Aorta (tissue), 5 donors: ENCODE measurements at regions of chr6 and their contacts with region 1.

Region 1: GRCh38 chr6:41027799-41028628 is 11.0 kb downstream of the UNC5CL start:
- DNase-seq: peak; percentile 88 to 97
- ATAC-seq: peak; percentile 95
- H3K4me3 ChIP-seq: peak overlapping the region; percentile 8 to 10
- H3K27ac ChIP-seq: no peak overlapping the region
- H3K4me1 ChIP-seq: no peaks in the 10 kb centered on the region
- H3K27me3 ChIP-seq: no peaks in the 10 kb centered on the region

Region 2: DNA sequence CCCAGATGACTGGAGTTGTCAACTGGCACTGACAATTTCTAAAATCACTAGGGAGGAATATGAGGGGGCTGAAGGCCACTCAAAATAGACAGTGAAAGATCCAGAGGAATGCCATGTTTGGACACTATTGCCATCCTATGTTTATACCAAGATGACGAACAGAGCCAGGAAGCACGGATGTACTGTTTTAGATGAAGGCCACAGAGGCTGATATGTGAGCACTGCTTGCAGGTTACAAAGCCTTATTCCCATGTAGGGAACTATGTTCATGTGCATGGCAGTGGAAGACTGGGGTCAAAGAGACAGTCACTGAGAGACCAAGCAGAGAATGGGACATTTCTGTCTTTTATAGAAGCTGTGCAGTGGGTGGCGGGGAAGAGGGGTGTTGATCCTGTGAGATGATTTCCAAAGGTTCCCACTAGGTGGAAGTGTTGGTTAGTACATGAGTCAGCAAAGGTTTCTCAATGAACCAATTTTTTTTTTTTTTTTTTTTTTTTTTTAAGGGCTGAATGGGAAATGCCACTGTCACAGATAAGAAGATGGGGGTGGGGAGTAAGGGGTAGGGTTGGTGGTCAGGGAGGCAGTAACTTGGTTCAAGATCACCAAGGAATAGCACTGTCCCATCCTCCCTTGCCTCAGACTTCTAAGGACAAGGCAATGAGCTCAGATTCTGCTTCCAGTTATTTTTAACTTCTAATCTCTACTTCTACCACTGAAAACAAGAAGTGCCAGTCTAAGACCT is 1047.0 kb before region 1 on chr6:
- intact Hi-C with region 1: loop called (anchors 5 kb)
- DNase-seq: no peak
- ATAC-seq: peak; percentile 89
- H3K4me3 ChIP-seq: no peak overlapping the region
- H3K27ac ChIP-seq: no peak overlapping the region
- H3K4me1 ChIP-seq: no peaks in the 10 kb centered on the region
- H3K27me3 ChIP-seq: no peaks in the 10 kb centered on the region

Region 3: GRCh38 chr6:40550202-40551101 is 477.6 kb before region 1 on chr6:
- intact Hi-C with region 1: loop called in 1 of 2 experiments (anchors 5 kb)
- DNase-seq: peak in 1 of 2 donors; percentile 14
- ATAC-seq: peak; percentile 70
- H3K4me3 ChIP-seq: no peak overlapping the region
- H3K27ac ChIP-seq: no peak overlapping the region
- H3K4me1 ChIP-seq: no peaks in the 10 kb centered on the region
- H3K27me3 ChIP-seq: no peaks in the 10 kb centered on the region

Region 4: GRCh38 chr6:40912158-40912946 is 115.7 kb before region 1 on chr6:
- intact Hi-C with region 1: no loop called
- DNase-seq: peak in 1 of 2 donors; percentile 51
- ATAC-seq: peak; percentile 59
- H3K4me3 ChIP-seq: no peak overlapping the region
- H3K27ac ChIP-seq: no peak overlapping the region
- H3K4me1 ChIP-seq: peaks cover 0 to 3% of the 10 kb centered on the region in 2 donors
- H3K27me3 ChIP-seq: no peaks in the 10 kb centered on the region

Region 5: DNA sequence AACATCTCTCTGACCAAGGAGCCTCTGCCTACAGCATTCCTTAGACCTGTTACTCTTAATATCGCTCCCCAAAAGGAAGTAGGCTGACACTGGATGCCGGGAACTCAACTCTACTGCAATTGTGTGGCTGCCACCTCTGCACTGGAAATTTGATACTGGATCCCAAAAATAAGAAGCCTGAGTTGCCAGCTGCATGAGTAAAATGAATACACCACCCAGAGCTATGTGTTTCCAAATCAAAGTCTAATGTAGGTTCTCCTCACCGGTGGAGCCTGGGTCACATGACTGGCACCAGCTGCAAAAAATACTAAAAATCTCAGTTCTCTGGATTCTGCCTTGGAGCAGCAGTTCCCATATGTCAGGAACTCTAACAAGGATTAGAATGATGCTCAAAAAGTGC is 25.8 kb before region 1 on chr6:
- intact Hi-C with region 1: loop called in 1 of 2 experiments (anchors 1 kb)
- DNase-seq: no peak
- ATAC-seq: no peak
- H3K4me3 ChIP-seq: no peak overlapping the region
- H3K27ac ChIP-seq: no peak overlapping the region
- H3K4me1 ChIP-seq: no peaks in the 10 kb centered on the region
- H3K27me3 ChIP-seq: no peaks in the 10 kb centered on the region

Region 6: GRCh38 chr6:41066867-41067304 is 38.9 kb after region 1 on chr6:
- intact Hi-C with region 1: loop called in 1 of 2 experiments (anchors 5 kb)
- DNase-seq: peak; percentile 81 to 87
- ATAC-seq: no peak
- H3K4me3 ChIP-seq: no peak overlapping the region
- H3K27ac ChIP-seq: no peak overlapping the region
- H3K4me1 ChIP-seq: no peaks in the 10 kb centered on the region
- H3K27me3 ChIP-seq: no peaks in the 10 kb centered on the region